CD4-positive, alpha-beta T cell (primary cell): ENCODE measurements at regions of chr11 and their contacts with region 1.

Region 1: DNA sequence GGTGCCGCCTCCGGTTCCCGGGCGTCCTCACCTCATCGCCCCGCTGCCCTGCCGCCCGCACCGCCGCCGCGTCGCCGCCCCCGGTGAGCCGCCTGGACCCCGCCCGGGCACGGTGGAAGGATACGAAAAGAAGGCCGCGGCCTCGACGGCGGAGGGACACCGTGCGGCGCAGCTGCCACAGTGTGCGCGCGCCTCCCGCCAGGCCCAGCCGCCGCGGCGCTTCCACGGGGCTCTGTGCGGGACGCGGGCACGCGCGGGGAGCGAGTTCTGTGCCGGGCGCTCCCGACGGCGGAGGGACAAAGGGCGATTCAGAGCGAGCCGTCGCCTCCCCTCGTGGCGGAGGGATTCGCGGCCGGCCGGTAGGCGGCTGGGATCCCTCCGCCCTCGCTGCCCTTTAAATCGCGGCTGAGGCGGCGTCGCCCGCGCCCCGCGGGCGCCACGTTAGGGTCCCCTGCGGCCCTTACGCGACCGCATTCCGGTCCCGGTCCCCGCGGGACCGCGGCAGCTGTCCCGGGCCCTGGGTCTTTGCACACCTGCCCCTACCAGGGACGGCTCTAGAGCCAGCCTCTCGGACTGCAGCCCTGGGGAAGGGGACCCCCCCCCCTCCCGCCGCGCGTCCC is 569 bp upstream of the KMT5B start:
- DNase-seq: peak; percentile 60 to 95 (median 80)
- ATAC-seq: peak; percentile 32
- H3K4me3 ChIP-seq: peak overlapping the region; percentile 78
- H3K4me3 Mint-ChIP-seq: peak overlapping the region; percentile 73
- H3K27ac ChIP-seq: peak overlapping the region in 1 of 2 donors; percentile 74
- H3K27ac Mint-ChIP-seq: peak overlapping the region; percentile 77
- H3K4me1 ChIP-seq: peaks cover 41% of the 10 kb centered on the region
- H3K4me1 Mint-ChIP-seq: peaks cover 51% of the 10 kb centered on the region
- H3K27me3 ChIP-seq: no peaks in the 10 kb centered on the region
- H3K27me3 Mint-ChIP-seq: peaks cover 13% of the 10 kb centered on the region
- CTCF ChIP-seq: no peak

Region 2: GRCh38 chr11:68199295-68199987 is 14.2 kb before region 1 on chr11:
- CTCF ChIA-PET with region 1: interaction called, 12 read pairs
- POLR2A ChIA-PET with region 1: no interaction called
- intact Hi-C with region 1: no loop called
- DNase-seq: no peak
- ATAC-seq: no peak
- H3K4me3 ChIP-seq: no peak overlapping the region
- H3K4me3 Mint-ChIP-seq: no peak overlapping the region
- H3K27ac ChIP-seq: no peak overlapping the region
- H3K27ac Mint-ChIP-seq: no peak overlapping the region
- H3K4me1 ChIP-seq: peaks cover 31% of the 10 kb centered on the region
- H3K4me1 Mint-ChIP-seq: peaks cover 77% of the 10 kb centered on the region
- H3K27me3 ChIP-seq: no peaks in the 10 kb centered on the region
- H3K27me3 Mint-ChIP-seq: no peaks in the 10 kb centered on the region
- CTCF ChIP-seq: no peak

Region 3: GRCh38 chr11:68447015-68447801 is 233.5 kb after region 1 on chr11:
- CTCF ChIA-PET with region 1: no interaction called
- POLR2A ChIA-PET with region 1: no interaction called
- intact Hi-C with region 1: loop called in 1 of 2 experiments (anchors 5 kb)
- DNase-seq: peak; percentile 66 to 87 (median 73)
- ATAC-seq: peak; percentile 100
- H3K4me3 ChIP-seq: no peak overlapping the region
- H3K4me3 Mint-ChIP-seq: no peak overlapping the region
- H3K27ac ChIP-seq: no peak overlapping the region
- H3K27ac Mint-ChIP-seq: no peak overlapping the region
- H3K4me1 ChIP-seq: peaks cover 10% of the 10 kb centered on the region
- H3K4me1 Mint-ChIP-seq: no peaks in the 10 kb centered on the region
- H3K27me3 ChIP-seq: no peaks in the 10 kb centered on the region
- H3K27me3 Mint-ChIP-seq: no peaks in the 10 kb centered on the region
- CTCF ChIP-seq: peak; percentile 82